B cell (primary cell): ENCODE measurements at regions of chr14 and their contacts with region 1.

Region 1: GRCh38 chr14:51989293-51990234 is at the start of gene RTRAF:
- DNase-seq: peak; percentile 95
- ATAC-seq: peak; percentile 96
- H3K4me3 ChIP-seq: peak within 1 kb of the TSS; percentile 72 to 94 (median 77)
- H3K4me3 Mint-ChIP-seq: peak within 1 kb of the TSS; percentile 98
- H3K27ac ChIP-seq: peak within 1 kb of the TSS; percentile 67 to 95
- H3K27ac Mint-ChIP-seq: peak within 1 kb of the TSS; percentile 91
- H3K4me1 ChIP-seq: peaks cover 15 to 24% of the 10 kb centered on the region in 2 donors
- H3K4me1 Mint-ChIP-seq: peaks cover 34% of the 10 kb centered on the region
- H3K27me3 ChIP-seq: no peaks in the 10 kb centered on the region
- H3K27me3 Mint-ChIP-seq: no peaks in the 10 kb centered on the region
- CTCF ChIP-seq: no peak
- total RNA-seq, gene RTRAF: 91.1 and 94.2 TPM in 2 replicates

Region 2: GRCh38 chr14:50475462-50475861 is 1514.1 kb before region 1 on chr14:
- CTCF ChIA-PET with region 1: no interaction called
- POLR2A ChIA-PET with region 1: no interaction called
- intact Hi-C with region 1: no loop called
- DNase-seq: no peak
- ATAC-seq: no peak
- H3K4me3 ChIP-seq: no peak overlapping the region
- H3K4me3 Mint-ChIP-seq: no peak overlapping the region
- H3K27ac ChIP-seq: no peak overlapping the region
- H3K27ac Mint-ChIP-seq: no peak overlapping the region
- H3K4me1 ChIP-seq: no peaks in the 10 kb centered on the region
- H3K4me1 Mint-ChIP-seq: no peaks in the 10 kb centered on the region
- H3K27me3 ChIP-seq: no peaks in the 10 kb centered on the region
- H3K27me3 Mint-ChIP-seq: no peaks in the 10 kb centered on the region
- CTCF ChIP-seq: no peak

Region 3: DNA sequence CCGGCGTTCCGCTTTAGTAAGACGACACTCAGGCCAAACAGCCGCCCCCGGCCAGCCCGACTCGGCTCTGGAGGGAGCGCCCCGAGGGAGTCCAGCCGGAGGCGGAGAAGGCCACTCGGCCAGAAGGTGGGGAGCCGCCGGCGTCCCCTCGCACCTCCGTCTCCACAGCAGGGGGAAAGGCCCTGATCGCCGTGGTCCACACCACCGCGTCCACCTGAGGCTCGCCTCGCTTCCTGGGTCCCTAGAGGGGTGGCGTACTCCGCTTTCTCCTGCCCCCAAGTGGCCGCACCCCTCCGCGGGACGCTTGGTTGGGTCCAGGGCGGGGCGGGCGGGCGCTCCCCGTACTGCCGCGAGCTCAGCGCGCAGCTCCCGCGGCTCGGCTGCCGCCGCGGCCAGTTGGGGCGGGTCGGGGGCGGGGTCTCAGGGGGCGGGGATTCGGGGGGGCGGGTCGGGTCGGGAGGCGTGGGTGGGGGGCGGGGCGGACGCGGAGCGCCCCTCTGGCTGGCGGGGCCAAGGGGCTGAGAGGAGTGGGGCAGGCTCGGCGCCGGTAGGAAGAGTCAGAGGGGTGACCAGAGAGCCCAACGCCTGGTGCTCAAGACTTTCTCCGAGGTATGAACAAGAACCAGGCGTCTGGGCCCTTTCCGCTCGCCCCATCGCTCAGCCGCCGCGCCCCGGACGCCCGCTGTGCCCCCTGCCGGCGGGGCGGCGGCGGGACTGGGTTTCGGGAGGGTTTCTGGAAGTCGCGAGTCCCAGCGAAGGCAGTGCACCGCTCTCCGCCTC is 338.0 kb before region 1 on chr14 and contains the start of gene FRMD6:
- CTCF ChIA-PET with region 1: no interaction called
- POLR2A ChIA-PET with region 1: no interaction called
- intact Hi-C with region 1: loop called (anchors 2 kb)
- DNase-seq: peak; percentile 90
- ATAC-seq: peak; percentile 80
- H3K4me3 ChIP-seq: peak within 1 kb of the TSS; percentile 34 to 85 (median 69)
- H3K4me3 Mint-ChIP-seq: peak within 1 kb of the TSS; percentile 85
- H3K27ac ChIP-seq: no peak within 1 kb of the TSS
- H3K27ac Mint-ChIP-seq: peak within 1 kb of the TSS; percentile 56
- H3K4me1 ChIP-seq: peaks cover 19 to 25% of the 10 kb centered on the region in 2 donors
- H3K4me1 Mint-ChIP-seq: peaks cover 12% of the 10 kb centered on the region
- H3K27me3 ChIP-seq: peaks cover 0 to 37% (median 34%) of the 10 kb centered on the region in 4 experiments
- H3K27me3 Mint-ChIP-seq: peaks cover 41% of the 10 kb centered on the region
- CTCF ChIP-seq: peak; percentile 75
- total RNA-seq, gene FRMD6: 0.17 and 0.30 TPM in 2 replicates

Region 4: DNA sequence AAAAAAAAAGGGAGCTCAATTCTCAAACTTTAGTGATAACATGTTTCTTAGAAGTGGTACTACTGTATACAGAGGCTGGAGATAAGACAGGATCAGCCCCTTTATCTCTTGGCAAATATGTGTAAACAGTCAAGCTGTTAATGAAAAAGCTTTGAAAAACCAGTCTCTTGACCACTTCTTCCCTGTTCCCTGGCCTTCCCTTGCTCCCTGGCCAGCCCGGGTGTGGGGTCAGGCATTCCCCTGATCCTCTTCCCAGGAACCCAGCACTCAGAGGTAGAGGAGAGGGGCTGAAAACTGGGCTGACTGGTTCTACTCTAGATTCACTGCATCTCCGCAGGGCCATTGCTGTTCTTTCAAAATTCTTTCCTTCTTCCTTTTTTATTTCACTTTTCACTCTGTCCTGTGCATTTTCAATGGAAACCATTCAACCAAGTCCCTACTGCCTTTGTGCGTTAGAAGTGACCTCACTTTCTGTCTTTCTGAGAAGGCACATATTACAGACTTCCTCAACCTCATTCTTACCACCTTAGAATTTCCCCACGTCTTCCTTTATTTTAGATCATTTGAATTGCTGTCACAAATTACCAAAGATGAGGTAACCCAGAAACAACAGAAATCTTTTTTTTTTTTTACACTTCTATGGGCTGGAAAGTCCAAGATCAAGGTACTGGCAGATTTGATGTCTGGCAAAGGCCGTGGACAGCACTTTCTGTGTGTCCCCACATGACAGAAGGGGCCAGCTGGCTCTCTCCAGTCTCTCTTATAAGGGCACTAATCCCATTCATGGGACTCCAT is 123.4 kb before region 1 on chr14:
- CTCF ChIA-PET with region 1: no interaction called
- POLR2A ChIA-PET with region 1: no interaction called
- intact Hi-C with region 1: loop called (anchors 5 kb)
- DNase-seq: peak; percentile 79
- ATAC-seq: peak; percentile 62
- H3K4me3 ChIP-seq: no peak overlapping the region
- H3K4me3 Mint-ChIP-seq: no peak overlapping the region
- H3K27ac ChIP-seq: peak overlapping the region; percentile 34 to 67
- H3K27ac Mint-ChIP-seq: no peak overlapping the region
- H3K4me1 ChIP-seq: peaks cover 63 to 74% of the 10 kb centered on the region in 2 donors
- H3K4me1 Mint-ChIP-seq: peaks cover 52% of the 10 kb centered on the region
- H3K27me3 ChIP-seq: no peaks in the 10 kb centered on the region
- H3K27me3 Mint-ChIP-seq: no peaks in the 10 kb centered on the region
- CTCF ChIP-seq: no peak

Region 5: GRCh38 chr14:52791203-52792096 is 801.9 kb after region 1 on chr14 and contains the start of gene GNPNAT1:
- CTCF ChIA-PET with region 1: no interaction called
- POLR2A ChIA-PET with region 1: no interaction called
- intact Hi-C with region 1: loop called (anchors 10 kb)
- DNase-seq: peak; percentile 89
- ATAC-seq: peak; percentile 96
- H3K4me3 ChIP-seq: peak within 1 kb of the TSS; percentile 58 to 87 (median 80)
- H3K4me3 Mint-ChIP-seq: peak within 1 kb of the TSS; percentile 89
- H3K27ac ChIP-seq: peak within 1 kb of the TSS; percentile 35 to 58
- H3K27ac Mint-ChIP-seq: peak within 1 kb of the TSS; percentile 86
- H3K4me1 ChIP-seq: peaks cover 14 to 20% of the 10 kb centered on the region in 2 donors
- H3K4me1 Mint-ChIP-seq: peaks cover 26% of the 10 kb centered on the region
- H3K27me3 ChIP-seq: no peaks in the 10 kb centered on the region
- H3K27me3 Mint-ChIP-seq: no peaks in the 10 kb centered on the region
- CTCF ChIP-seq: no peak
- total RNA-seq, gene GNPNAT1: 7.8 and 8.3 TPM in 2 replicates